HAP-1 (cell line): ENCODE measurements at regions of chr18 and their contacts with region 1.

Region 1: GRCh38 chr18:9771261-9771976 is 63.3 kb downstream of the RAB31 start:
- DNase-seq: peak; percentile 66 to 93
- H3K4me3 ChIP-seq: no peak overlapping the region
- H3K4me1 ChIP-seq: peaks cover 12% of the 10 kb centered on the region
- H3K27me3 ChIP-seq: no peaks in the 10 kb centered on the region

Region 2: GRCh38 chr18:9838144-9838877 is 66.9 kb after region 1 on chr18:
- in situ Hi-C with region 1: loop called (anchors 10 kb)
- DNase-seq: no peak
- H3K4me3 ChIP-seq: no peak overlapping the region
- H3K4me1 ChIP-seq: no peaks in the 10 kb centered on the region; the same call in none of the 2 replicates
- H3K27me3 ChIP-seq: no peaks in the 10 kb centered on the region

Region 3: GRCh38 chr18:10111949-10112348 is 340.5 kb after region 1 on chr18:
- in situ Hi-C with region 1: no loop called
- DNase-seq: no peak
- H3K4me3 ChIP-seq: no peak overlapping the region
- H3K4me1 ChIP-seq: no peaks in the 10 kb centered on the region
- H3K27me3 ChIP-seq: no peaks in the 10 kb centered on the region